ENCODE measurements at regions of chr20 and their contacts with region 1.

Region 1: DNA sequence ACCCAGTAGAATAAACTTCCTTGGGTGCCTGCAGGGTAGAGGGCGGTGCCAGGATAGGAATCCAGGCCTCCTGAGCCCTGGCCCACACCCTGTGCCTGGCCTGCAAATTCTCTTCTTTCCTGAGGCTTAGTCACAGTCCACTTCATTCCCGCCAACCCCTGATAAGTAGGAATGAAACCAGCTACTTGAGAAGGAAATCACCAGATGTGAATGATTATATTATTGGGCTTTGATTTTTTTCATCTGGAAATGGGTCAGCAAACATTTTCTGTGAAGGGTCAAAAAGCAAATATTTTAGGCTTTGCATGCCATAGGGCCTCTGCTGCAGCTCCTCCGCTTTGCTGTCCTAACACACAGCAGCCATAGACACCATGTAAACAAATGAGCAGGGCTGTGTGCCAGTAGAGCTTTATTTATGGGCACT is 50.2 kb downstream of the STK35 start:
- DNase-seq: peak in 1 of 2 experiments; percentile 31
- ATAC-seq: peak in 1 of 2 experiments; percentile 60; a peak in 4 of 6 replicates
- H3K4me3 ChIP-seq: no peak overlapping the region
- H3K27ac ChIP-seq: no peak overlapping the region
- H3K4me1 ChIP-seq: peaks cover 12% of the 10 kb centered on the region; the same call in 1 of the 3 replicates
- CTCF ChIP-seq: no peak
- EP300 ChIP-seq: no peak
- POLR2A ChIP-seq: no peak
- RAD21 ChIP-seq: no peak

Region 2: DNA sequence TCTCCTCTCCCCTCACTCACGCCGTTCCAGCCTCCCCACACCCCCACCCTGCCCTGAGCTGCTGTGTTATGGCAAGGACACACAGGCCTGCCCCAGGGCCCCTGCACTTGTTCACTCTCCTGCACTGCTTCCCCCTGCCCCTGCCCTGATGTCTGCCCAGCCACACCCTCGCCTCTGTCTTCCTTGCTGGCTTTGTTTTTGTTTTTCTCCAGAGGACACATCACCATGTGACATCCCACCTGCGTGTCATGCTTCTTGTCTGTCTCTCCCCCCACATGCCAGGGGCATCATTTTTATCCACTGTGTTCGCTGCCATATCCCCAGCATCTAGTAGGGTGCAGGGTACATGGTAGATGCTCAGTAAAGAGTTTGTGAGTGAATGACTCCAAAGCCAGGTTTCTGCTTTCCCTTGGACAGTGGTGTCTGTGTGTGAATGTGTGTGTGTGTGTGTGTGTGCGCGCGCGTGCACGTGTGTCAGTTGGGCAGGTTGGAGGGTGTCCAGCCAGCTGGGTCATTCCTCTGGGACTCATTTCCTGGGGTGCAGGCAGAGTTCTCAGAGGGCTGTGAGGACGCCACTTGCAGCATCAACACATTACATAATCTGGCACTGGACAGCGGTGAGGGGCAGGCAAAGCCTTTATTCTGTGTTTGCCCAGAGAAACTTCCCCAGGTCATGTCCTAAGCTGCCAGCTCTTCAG is 10.4 kb after region 1 on chr20:
- CTCF ChIA-PET with region 1: interaction called, 17 read pairs
- POLR2A ChIA-PET with region 1: no interaction called
- DNase-seq: no peak
- ATAC-seq: no peak
- H3K4me3 ChIP-seq: no peak overlapping the region
- H3K27ac ChIP-seq: no peak overlapping the region
- H3K4me1 ChIP-seq: no peaks in the 10 kb centered on the region
- CTCF ChIP-seq: no peak
- EP300 ChIP-seq: no peak
- POLR2A ChIP-seq: no peak
- RAD21 ChIP-seq: no peak